Activated naive CD4-positive, alpha-beta T cell treated with anti-CD3 and anti-CD28 coated beads for 36 hours (primary cell): ENCODE measurements at regions of chr21 and their contacts with region 1.

Region 1: GRCh38 chr21:14630556-14631069 is 84.5 kb upstream of the SAMSN1 start:
- DNase-seq: no peak
- H3K4me3 Mint-ChIP-seq: no peak overlapping the region
- H3K27ac Mint-ChIP-seq: peak overlapping the region; percentile 65
- H3K4me1 Mint-ChIP-seq: peaks cover 19% of the 10 kb centered on the region
- H3K27me3 Mint-ChIP-seq: no peaks in the 10 kb centered on the region

Region 2: DNA sequence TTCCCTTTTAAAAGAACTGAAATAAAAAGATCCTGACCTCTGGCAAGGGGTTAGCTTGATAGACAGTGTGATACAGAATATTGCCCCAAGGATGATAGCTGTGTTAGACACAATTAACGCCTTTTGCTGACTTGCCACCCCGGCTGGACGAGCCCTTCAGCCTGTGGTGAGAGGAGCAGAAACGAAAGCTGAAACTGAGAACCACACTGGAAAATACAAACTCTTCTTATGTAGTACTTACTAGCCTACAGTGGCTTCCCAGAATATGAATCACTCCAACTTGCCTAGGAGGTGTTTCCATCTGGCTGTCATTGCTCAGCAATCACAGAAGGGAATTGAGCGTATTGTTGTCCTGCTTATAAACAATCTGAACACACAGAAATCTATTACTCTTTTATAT is 107.4 kb before region 1 on chr21:
- CTCF ChIA-PET with region 1: no interaction called
- intact Hi-C with region 1: loop called (anchors 1 kb)
- DNase-seq: peak; percentile 51
- H3K4me3 Mint-ChIP-seq: peak overlapping the region; percentile 55
- H3K27ac Mint-ChIP-seq: peak overlapping the region; percentile 68
- H3K4me1 Mint-ChIP-seq: peaks cover 53% of the 10 kb centered on the region
- H3K27me3 Mint-ChIP-seq: no peaks in the 10 kb centered on the region

Region 3: DNA sequence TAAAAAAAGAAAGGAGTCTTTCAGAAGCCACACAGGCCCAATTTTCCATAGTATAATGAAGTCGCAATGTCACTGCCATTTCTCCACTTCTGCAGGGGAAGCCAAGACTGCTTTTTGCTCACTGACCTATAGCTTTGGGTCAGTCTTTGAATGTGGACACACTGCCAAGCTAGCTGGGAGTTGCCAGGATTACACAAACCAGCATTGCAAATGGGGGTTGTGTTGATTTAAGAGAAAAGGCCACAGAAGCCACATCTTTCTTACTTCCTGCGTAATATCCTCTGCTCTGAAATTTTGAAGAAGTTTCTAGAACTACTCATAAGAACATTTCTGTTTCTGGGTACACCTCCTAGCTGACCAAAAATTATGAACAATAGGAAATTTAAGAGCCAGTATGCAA is 38.7 kb before region 1 on chr21:
- CTCF ChIA-PET with region 1: no interaction called
- intact Hi-C with region 1: loop called (anchors 2 kb)
- DNase-seq: no peak
- H3K4me3 Mint-ChIP-seq: no peak overlapping the region
- H3K27ac Mint-ChIP-seq: no peak overlapping the region
- H3K4me1 Mint-ChIP-seq: peaks cover 19% of the 10 kb centered on the region
- H3K27me3 Mint-ChIP-seq: no peaks in the 10 kb centered on the region

Region 4: DNA sequence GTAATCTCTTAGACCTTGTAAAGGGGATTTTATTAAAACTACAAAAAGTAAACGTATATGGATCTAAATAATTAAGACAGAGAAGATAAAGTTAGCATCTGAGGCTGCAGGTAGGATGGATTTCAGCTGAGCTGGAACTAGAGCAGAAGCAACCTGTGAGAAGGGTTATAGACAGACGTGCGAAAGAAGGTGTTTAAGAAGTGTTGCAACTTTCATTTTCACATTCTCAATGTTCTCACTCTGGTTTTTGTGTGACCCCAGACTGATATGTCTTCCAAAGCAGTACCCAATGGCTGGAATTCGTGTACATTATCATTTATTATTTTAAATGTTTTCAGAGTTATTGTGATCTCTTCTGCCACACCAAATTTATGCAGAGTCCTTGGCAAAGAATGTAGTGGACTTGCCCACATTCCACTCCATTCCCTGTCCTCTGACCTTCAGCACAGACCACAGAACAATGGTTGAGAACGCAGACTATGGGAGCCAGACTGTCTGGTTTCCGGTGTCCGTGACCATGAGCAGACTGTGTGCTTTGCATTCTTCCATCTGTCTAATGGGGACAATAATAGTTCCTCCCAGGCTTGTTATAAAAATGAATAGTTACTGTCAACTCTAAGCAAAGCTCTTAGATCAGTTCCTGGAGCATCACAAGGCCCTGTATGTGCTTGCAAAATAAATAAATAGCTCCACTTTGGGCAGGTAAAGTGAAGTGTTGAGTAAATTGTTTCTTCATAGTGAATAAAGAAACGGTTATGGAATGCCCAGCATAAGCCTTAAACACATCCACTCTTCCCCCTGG is 56.1 kb after region 1 on chr21:
- CTCF ChIA-PET with region 1: no interaction called
- intact Hi-C with region 1: loop called (anchors 2 kb)
- DNase-seq: no peak
- H3K4me3 Mint-ChIP-seq: no peak overlapping the region
- H3K27ac Mint-ChIP-seq: no peak overlapping the region
- H3K4me1 Mint-ChIP-seq: peaks cover 43% of the 10 kb centered on the region
- H3K27me3 Mint-ChIP-seq: no peaks in the 10 kb centered on the region

Region 5: GRCh38 chr21:15095326-15095725 is 464.7 kb after region 1 on chr21:
- CTCF ChIA-PET with region 1: no interaction called
- intact Hi-C with region 1: no loop called
- DNase-seq: no peak
- H3K4me3 Mint-ChIP-seq: no peak overlapping the region
- H3K27ac Mint-ChIP-seq: no peak overlapping the region
- H3K4me1 Mint-ChIP-seq: no peaks in the 10 kb centered on the region
- H3K27me3 Mint-ChIP-seq: no peaks in the 10 kb centered on the region